ENCODE measurements at regions of chr4 and their contacts with region 1.

Region 1: DNA sequence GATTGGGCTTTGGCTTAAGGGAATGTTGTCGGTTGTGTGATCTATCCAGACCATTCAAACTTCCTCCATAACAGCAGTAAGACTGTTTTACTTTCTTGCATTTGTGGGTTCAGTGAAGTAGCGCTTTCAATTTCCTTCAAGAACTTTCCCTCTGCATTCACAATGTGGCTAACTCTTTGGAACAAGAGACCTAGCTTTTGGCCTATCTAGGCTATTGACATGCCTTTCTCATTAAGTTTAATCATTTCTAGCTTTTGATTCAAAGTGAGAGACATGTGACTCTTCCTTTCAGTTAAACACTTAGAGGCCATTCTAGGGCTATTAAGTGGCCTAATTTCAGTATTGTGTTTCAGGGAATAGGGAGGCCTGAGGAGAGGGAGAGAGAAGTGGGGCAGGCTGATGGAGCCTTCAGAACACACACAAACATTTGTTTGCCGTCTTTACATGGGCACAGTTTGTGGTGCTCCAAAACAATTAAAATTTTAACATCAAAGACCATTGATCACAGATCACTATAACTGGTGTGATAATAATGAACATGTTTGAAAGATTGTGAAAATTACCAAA is 34.1 kb downstream of the ADH5 start:
- DNase-seq: no peak
- H3K4me3 Mint-ChIP-seq: no peak overlapping the region
- H3K27ac Mint-ChIP-seq: no peak overlapping the region
- H3K4me1 Mint-ChIP-seq: peaks cover 11% of the 10 kb centered on the region
- H3K27me3 Mint-ChIP-seq: no peaks in the 10 kb centered on the region
- CTCF ChIP-seq: no peak

Region 2: DNA sequence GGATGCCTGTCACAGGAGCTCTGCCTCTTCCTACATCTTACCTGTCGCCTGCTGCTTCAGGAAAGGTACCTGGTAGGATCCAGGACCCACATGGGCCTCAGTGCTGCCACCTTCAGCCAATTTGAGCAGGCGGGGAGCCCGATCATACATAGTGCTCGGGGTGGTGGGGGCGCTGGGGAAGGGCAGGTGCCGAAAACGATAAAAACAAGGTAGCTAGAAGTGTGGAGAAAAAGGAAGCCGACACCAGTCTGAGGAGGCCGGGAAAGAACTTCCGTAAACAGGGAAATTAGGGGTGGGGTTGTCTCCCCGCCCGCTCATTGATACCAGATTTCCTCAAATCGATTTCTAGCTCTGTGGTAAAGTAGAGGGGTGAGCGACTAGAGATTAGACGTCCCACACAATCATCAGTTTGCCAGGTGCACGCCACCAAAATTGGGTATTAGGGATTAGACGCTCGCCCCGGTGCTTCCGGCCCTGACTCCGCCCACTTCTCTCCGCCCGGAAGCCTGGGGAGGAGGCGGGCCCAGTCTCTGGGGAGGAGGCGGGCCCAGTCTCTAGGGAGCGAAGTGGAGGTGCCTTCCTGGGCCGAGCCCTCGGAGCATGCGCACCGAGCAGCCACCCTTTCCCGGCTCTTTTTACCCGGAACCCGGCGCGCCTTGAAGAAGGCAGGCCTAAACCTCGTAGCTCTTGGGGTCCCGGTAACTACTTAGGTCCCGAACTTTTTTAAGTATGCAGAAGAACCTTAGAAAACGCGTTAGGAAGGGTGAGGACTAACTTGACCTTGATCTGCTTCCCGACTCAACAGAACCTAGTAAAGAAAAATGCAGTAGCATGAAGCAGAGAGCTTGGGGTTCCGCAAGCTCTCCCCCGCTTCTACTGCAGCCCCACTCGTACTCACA is 911.3 kb before region 1 on chr4 and contains the start of gene STPG2:
- CTCF ChIA-PET with region 1: no interaction called
- intact Hi-C with region 1: loop called (anchors 10 kb)
- DNase-seq: peak; percentile 92
- H3K4me3 Mint-ChIP-seq: peak within 1 kb of the TSS; percentile 81
- H3K27ac Mint-ChIP-seq: peak within 1 kb of the TSS; percentile 88
- H3K4me1 Mint-ChIP-seq: peaks cover 11% of the 10 kb centered on the region
- H3K27me3 Mint-ChIP-seq: no peaks in the 10 kb centered on the region
- CTCF ChIP-seq: peak; percentile 37
- total RNA-seq, gene STPG2: not detected in 2 replicates

Region 3: DNA sequence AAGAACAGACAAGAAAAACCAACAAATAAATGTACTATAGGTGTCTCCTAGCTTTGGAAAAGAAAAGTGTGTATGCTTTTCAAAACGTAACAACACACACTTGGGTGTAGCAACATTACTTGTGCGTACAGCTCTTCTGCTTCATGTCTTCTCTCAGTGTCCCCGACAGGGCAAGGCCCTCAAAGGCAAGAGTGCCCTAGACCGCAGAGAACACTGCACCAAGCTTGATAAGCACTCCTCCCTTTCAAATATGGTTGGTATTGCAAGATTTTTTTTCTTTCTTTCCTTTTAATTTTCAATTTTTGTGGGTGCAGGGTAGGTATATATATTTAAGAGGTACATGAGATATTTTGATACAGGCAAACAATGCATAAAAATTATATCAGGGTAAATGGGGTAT is 232.4 kb before region 1 on chr4:
- CTCF ChIA-PET with region 1: no interaction called
- intact Hi-C with region 1: no loop called
- DNase-seq: no peak
- H3K4me3 Mint-ChIP-seq: no peak overlapping the region
- H3K27ac Mint-ChIP-seq: no peak overlapping the region
- H3K4me1 Mint-ChIP-seq: no peaks in the 10 kb centered on the region
- H3K27me3 Mint-ChIP-seq: no peaks in the 10 kb centered on the region
- CTCF ChIP-seq: no peak

Region 4: DNA sequence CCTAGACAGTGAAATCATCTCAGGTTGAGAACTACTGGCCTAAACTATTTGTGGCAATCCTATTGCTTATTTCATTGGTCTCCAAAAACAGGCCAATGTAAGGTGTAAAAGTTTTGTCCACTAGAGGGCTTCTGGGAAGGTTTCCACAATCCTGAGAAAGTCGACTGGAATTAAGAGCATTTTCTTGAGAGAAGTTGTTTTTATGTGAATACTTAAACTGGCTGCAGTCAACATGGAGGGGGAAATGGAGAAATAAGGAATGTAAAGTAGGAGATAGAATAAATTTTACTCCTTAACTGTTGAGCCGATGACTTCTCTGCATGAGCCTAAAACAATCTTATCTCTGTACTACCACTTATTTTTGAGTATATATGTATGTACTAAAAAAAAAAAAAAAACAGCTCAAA is 114.6 kb before region 1 on chr4:
- CTCF ChIA-PET with region 1: no interaction called
- intact Hi-C with region 1: loop called (anchors 5 kb)
- DNase-seq: peak; percentile 20
- H3K4me3 Mint-ChIP-seq: no peak overlapping the region
- H3K27ac Mint-ChIP-seq: no peak overlapping the region
- H3K4me1 Mint-ChIP-seq: peaks cover 32% of the 10 kb centered on the region
- H3K27me3 Mint-ChIP-seq: no peaks in the 10 kb centered on the region
- CTCF ChIP-seq: peak; percentile 69

Measured in Calu3 (cell line).